ENCODE measurements at regions of chr16 and their contacts with region 1.

Region 1: GRCh38 chr16:27690608-27691007 is 140.7 kb downstream of the KATNIP start:
- DNase-seq: peak; percentile 31
- H3K4me3 Mint-ChIP-seq: no peak overlapping the region
- H3K27ac Mint-ChIP-seq: no peak overlapping the region
- H3K4me1 Mint-ChIP-seq: no peaks in the 10 kb centered on the region
- H3K27me3 Mint-ChIP-seq: no peaks in the 10 kb centered on the region
- CTCF ChIP-seq: peak; percentile 42

Region 2: DNA sequence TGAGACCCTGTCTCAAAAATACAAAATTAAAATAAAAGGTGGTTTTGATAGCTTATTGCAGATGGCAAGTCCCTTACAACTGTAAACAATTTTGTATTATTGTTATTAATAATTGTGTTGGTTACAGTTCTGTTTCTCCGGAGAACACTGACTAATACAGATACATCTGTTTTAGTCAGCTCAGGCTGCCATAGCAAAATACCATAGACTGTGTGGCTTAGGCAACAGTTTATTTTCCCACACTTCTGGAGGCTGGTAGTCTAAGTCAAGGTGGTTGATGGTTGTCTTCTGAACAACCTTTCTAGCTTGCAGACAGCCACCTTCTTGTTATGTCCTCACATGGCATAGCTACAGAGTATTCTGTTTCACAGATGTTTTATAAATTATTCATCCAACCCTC is 302.9 kb before region 1 on chr16:
- CTCF ChIA-PET with region 1: no interaction called
- intact Hi-C with region 1: no loop called
- DNase-seq: no peak
- H3K4me3 Mint-ChIP-seq: no peak overlapping the region
- H3K27ac Mint-ChIP-seq: no peak overlapping the region
- H3K4me1 Mint-ChIP-seq: no peaks in the 10 kb centered on the region
- H3K27me3 Mint-ChIP-seq: peaks cover 87% of the 10 kb centered on the region
- CTCF ChIP-seq: no peak

Region 3: DNA sequence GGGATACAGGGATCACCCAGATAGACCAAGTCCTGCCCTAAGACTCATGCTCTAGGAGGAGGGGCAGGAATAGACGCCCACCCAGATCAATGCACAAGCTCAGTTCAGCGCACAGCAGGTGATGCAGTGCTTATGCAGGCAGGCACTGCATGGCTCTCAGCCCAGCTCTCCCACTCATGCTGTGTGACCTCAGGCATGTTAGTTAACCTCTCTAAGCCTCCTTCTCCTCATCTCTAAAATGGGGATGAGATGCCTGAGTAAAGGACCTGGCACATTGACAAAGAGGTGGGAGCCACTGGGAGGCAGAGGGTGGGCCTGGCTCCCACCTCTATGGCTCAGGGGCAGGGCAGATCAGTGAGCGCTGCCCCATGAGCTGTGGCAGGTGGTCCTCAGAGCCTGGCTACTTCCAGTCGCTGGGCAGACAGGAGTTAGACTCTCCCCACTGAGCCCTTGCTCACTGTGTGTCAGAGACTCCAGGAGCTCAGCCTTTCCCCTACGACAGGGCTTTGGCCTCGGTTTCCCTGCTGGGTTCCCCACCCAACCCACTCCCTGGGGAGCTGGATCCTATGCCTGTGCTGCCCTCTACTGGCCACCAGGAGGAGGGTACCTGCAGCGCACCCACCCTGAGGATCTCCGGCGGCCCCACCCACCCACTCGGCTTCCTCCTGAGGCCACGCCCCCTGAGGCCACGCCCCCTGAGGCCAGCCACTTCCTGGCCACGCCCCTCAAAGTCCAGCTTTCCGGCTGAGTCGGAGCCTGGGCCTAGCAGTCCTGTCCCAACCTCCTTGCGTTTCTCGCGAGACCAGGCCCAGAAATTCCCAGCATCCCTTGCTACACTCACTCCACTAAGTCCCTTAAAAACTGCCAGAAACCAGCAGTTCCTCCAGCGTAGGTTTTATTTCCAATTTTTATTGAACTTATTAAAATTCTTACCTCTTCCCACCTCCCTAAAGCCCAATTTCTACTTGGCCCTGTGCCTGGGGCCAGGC is 176.8 kb after region 1 on chr16:
- CTCF ChIA-PET with region 1: no interaction called
- intact Hi-C with region 1: loop called (anchors 10 kb)
- DNase-seq: peak; percentile 81
- H3K4me3 Mint-ChIP-seq: no peak overlapping the region
- H3K27ac Mint-ChIP-seq: no peak overlapping the region
- H3K4me1 Mint-ChIP-seq: no peaks in the 10 kb centered on the region
- H3K27me3 Mint-ChIP-seq: no peaks in the 10 kb centered on the region
- CTCF ChIP-seq: peak; percentile 48

Measured in Calu3 (cell line).